Left cardiac atrium (tissue), 4 donors: ENCODE measurements at regions of chr2 and their contacts with region 1.

Region 1: GRCh38 chr2:178193823-178194599 is at the start of gene OSBPL6:
- DNase-seq: peak; percentile 87
- ATAC-seq: peak; percentile 96 to 98
- total RNA-seq, gene OSBPL6: 7.0 to 12.2 TPM

Region 2: DNA sequence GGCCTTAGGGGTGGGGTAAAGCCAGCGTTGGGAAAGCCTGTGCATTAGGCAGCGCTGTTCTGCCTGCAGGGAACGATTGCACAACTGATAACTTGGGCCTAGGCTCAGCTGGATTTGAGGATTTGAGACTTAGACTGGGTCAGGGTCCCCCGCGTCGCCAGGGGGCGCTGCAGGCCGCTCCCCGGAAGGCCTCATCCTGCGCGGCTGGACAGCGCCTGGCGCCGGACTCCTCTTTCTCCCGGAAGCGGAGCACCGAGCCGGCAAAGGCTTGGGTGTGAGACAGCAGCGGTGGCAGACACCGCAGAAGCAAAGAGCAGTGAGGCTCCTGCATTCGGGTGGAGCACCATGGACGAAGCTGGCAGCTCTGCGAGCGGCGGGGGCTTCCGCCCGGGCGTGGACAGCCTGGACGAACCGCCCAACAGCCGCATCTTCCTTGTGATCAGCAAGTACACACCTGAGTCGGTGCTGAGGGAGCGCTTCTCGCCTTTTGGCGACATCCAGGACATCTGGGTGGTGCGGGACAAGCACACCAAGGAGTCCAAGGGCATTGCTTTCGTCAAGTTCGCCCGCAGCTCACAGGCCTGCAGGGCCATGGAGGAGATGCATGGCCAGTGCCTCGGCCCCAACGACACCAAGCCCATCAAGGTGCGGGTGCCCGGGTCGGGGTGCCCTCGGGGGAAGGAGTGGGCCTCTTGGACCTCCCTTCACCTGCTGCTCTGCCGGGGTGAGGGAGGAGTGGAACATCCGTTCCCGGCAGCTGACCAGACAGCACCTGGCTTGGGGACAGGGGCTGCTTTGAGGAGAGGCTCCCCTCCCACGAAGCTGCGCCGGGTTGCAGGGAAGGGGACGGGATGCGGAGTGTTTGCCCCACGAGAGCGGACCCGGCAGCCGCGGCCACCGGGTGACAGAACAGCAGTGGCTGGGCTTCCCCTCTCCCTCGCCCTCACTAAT is 81.5 kb before region 1 on chr2 and contains the start of gene RBM45:
- intact Hi-C with region 1: no loop called
- DNase-seq: peak; percentile 95
- ATAC-seq: peak; percentile 99
- total RNA-seq, gene RBM45: 5.6 to 6.4 TPM

Region 3: DNA sequence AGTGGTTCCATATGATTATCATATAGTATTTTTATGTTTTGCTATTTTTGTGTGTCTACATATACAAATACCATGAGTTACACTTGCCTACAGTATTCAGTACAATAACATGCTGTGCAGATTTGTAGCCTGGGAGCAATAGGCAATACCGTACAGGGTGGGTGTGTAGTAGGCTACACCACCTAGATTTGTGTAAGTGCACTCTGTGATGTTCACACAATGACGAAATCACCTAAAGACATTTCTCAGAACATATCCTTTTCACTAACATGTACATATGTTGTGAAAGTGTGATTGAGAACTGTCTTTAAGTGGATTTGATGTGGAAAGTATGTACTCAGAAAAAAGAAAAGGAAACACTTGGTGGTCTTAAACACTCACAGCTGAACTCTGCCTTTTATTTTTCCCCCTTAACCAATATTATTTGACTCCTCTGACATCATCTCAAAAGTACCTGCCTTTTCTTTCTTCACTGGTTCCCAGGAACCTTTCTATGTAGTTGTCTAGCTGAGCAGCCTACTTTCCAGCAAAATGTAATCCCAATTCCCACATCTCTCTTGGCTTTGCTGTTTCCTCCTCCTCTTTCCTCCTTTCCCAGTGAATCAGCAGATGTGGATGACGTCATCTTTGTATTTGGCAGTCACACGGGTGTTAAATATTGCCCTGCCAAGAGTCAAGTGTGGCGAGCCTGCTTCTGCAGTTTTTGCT is 48.0 kb after region 1 on chr2:
- intact Hi-C with region 1: loop called in 1 of 2 experiments (anchors 10 kb)
- DNase-seq: peak; percentile 53
- ATAC-seq: peak; percentile 93

Region 4: GRCh38 chr2:178271629-178272333 is 77.8 kb after region 1 on chr2:
- intact Hi-C with region 1: loop called (anchors 5 to 10 kb)
- DNase-seq: peak; percentile 89
- ATAC-seq: peak; percentile 96

Region 5: DNA sequence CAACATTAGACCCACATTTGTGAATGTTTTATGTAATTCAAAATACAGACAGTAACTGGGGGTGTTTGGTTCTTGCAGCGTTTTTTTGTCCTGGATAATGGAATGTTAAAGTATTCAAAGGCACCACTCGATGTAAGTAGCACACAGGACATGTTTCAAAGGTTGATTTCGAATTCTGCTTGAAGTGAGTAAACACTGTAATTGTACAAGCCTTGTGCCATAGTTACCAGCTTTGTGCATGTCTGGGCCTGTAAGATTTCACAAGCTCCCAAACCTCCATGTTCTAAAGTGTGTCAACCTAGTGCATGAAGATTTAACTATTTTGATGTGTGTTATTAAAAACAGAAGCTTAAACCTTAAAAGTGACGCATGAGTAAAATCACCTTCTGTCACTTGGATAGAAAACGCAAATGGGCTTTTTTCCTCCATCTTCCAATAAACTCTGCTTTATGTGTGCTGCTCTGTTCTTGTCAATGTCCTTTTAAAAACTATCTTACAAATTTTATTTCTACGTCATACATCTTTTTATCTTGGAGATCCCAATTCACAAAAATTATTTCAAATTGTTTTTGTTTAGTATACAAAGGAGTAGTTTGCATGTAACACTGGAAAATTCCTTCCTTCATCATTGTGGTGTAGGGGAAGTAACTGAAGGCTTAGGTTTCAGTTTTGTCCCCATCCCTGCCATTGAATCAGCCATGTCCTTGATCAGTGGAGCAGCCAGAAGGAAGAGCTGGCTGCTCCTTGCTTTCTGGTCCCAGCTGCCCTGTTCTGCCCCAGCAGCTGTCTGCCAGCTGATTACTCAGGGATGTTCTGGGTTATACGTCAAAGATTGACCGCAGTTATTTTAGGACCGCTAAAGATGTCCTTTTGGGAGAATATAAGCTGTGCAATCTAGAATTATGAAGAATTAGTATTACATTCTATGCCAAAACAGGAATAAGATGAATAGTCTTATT is 137.7 kb after region 1 on chr2:
- intact Hi-C with region 1: no loop called
- DNase-seq: no peak
- ATAC-seq: no peak